ENCODE measurements at regions of chr3 and their contacts with region 1.

Region 1: DNA sequence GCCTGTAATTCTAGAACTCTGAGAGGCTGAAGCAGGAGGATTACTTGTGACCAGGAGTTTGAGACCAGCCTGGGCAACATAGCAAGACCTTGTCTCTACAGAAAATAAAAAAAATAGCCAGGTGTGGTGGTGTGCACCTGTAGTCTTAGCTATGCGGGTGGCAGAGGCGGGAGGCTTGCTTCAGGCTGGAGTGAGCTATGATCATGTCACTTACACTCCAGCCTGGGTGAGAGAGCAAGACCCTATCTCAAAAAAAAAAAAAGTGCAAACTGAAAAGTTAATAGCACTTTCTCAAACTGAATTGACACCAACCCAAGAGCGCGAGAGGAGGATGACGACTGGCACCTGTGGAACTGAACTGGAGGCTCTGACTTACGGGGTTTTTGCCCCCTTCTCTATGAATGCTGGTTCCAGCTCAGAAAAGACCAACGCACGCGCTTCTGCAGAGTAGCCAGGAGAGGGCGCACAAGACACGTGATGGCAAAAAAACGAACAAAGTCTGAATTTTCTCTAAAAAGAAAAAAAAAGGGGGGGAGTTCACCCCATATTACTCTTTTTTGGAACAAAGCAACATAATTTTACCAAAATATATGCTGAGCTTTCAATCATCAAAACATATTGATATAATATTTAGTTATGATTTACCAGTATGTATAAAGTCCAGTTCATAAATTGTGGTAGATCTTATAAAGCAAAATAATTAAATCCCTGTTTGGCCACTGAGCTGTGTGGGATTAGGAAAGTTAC is 23.7 kb downstream of the CFAP92 start:
- DNase-seq: peak; percentile 79
- ATAC-seq: peak; percentile 73
- H3K4me3 Mint-ChIP-seq: no peak overlapping the region
- H3K27ac Mint-ChIP-seq: no peak overlapping the region
- H3K4me1 Mint-ChIP-seq: peaks cover 14% of the 10 kb centered on the region
- H3K27me3 Mint-ChIP-seq: peaks cover 3% of the 10 kb centered on the region

Region 2: GRCh38 chr3:128879125-128879969 is 90.8 kb before region 1 on chr3 and contains the start of gene ACAD9:
- CTCF ChIA-PET with region 1: interaction called, 38 read pairs
- POLR2A ChIA-PET with region 1: no interaction called
- DNase-seq: peak; percentile 97
- ATAC-seq: peak; percentile 96
- H3K4me3 Mint-ChIP-seq: peak within 1 kb of the TSS; percentile 83
- H3K27ac Mint-ChIP-seq: peak within 1 kb of the TSS; percentile 90
- H3K4me1 Mint-ChIP-seq: peaks cover 57% of the 10 kb centered on the region
- H3K27me3 Mint-ChIP-seq: peaks cover 4% of the 10 kb centered on the region
- total RNA-seq, gene ACAD9: 61.3 to 68.3 TPM

Region 3: GRCh38 chr3:128993461-128994173 is 23.5 kb after region 1 on chr3 and contains the start of gene CFAP92:
- CTCF ChIA-PET with region 1: interaction called, 36 read pairs
- POLR2A ChIA-PET with region 1: interaction called, 3 read pairs
- DNase-seq: peak; percentile 95
- ATAC-seq: peak; percentile 98
- H3K4me3 Mint-ChIP-seq: peak within 1 kb of the TSS; percentile 65
- H3K27ac Mint-ChIP-seq: peak within 1 kb of the TSS; percentile 24
- H3K4me1 Mint-ChIP-seq: peaks cover 29% of the 10 kb centered on the region
- H3K27me3 Mint-ChIP-seq: peaks cover 10% of the 10 kb centered on the region
- total RNA-seq, gene CFAP92: 0.18 to 0.26 TPM

Region 4: DNA sequence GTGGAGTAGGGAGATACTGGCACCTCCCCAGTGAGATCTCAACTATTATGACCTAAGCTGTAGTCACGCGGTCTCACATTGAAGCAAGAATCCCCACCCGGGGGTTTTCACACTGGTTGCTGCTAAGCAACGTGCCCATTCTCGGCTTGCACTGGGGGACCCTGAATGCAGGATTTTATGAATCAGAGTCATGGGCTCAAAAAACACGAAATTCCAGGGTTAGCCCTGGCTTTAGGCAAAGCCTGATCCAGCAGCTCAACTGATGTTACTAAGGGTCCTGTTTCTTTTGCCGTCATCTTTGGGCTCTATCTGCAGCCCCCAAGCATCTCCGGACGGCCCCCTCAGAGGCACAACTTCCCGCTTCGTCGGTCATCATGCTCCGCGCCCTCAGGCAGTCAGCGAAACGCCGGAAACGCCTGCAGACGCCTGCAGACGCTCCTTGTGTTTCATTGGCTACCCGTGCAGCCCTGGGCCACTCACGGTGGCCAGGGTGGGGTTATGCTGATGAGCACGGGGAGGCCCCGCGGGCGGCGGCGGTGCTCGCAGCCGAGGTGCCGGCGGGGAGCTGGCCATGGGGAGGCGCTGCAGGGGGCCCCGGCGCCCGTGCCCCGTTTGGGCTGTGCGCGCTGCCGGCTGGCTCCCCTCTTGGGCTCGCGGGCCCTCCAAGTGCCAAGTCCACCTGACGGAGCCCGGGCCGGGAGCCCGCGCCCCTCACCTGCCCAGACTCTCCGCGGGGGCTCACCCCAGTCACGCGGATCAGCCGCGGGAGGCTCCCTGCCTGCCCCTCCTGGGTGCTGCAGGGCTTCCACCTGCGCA is 56.8 kb after region 1 on chr3:
- CTCF ChIA-PET with region 1: interaction called, 34 read pairs
- POLR2A ChIA-PET with region 1: no interaction called
- DNase-seq: peak; percentile 96
- ATAC-seq: peak; percentile 100
- H3K4me3 Mint-ChIP-seq: peak overlapping the region; percentile 81
- H3K27ac Mint-ChIP-seq: peak overlapping the region; percentile 95
- H3K4me1 Mint-ChIP-seq: peaks cover 30% of the 10 kb centered on the region
- H3K27me3 Mint-ChIP-seq: peaks cover 2% of the 10 kb centered on the region

Region 5: GRCh38 chr3:129068291-129068886 is 98.2 kb after region 1 on chr3:
- CTCF ChIA-PET with region 1: interaction called, 20 read pairs
- POLR2A ChIA-PET with region 1: no interaction called
- DNase-seq: peak; percentile 30
- ATAC-seq: peak; percentile 77
- H3K4me3 Mint-ChIP-seq: peak overlapping the region; percentile 58
- H3K27ac Mint-ChIP-seq: peak overlapping the region; percentile 39
- H3K4me1 Mint-ChIP-seq: peaks cover 25% of the 10 kb centered on the region
- H3K27me3 Mint-ChIP-seq: peaks cover 2% of the 10 kb centered on the region

Region 6: GRCh38 chr3:129132097-129132866 is 162.1 kb after region 1 on chr3:
- CTCF ChIA-PET with region 1: interaction called, 17 read pairs
- POLR2A ChIA-PET with region 1: no interaction called
- DNase-seq: no peak
- ATAC-seq: peak; percentile 31
- H3K4me3 Mint-ChIP-seq: no peak overlapping the region
- H3K27ac Mint-ChIP-seq: peak overlapping the region; percentile 48
- H3K4me1 Mint-ChIP-seq: peaks cover 11% of the 10 kb centered on the region
- H3K27me3 Mint-ChIP-seq: no peaks in the 10 kb centered on the region

Region 7: DNA sequence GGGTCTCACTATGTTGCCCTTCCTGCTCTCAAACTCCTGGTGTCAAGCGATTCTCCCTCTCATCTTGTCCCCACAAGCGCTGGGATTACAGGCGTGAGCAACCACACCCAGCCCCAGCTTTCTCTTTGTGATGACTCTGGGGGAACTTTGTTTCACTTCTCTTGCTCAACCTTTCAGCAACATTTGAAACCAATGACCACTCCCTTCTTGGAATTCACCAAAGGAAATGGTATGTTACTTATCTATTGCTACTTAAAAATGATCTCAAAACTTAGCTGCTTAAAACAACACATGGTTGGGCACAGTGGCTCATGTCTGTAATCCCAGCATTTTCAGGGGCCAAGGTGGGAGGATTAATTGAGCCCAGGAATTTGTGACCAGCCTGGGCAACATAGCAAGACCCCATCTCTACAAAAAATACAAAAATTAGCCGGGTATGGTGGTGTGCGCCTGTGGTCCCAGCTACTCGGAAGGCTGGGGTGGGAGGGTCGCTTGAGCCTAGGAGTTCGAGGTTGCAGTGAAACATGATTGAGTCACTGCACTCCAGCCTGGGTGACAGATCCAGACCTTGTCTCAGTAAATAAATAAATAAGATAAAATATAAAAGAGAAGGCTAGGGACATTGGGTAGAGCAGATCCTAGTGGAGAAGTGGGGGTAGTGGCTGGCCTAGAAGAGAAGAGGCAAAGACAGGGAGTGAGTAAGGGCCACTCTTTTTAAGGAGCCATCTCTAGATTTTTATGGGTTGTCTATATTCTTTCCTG is 269.0 kb after region 1 on chr3:
- CTCF ChIA-PET with region 1: interaction called, 23 read pairs
- POLR2A ChIA-PET with region 1: no interaction called
- DNase-seq: peak; percentile 70
- ATAC-seq: peak; percentile 80
- H3K4me3 Mint-ChIP-seq: peak overlapping the region; percentile 69
- H3K27ac Mint-ChIP-seq: peak overlapping the region; percentile 93
- H3K4me1 Mint-ChIP-seq: peaks cover 53% of the 10 kb centered on the region
- H3K27me3 Mint-ChIP-seq: no peaks in the 10 kb centered on the region

Measured in activated CD8-positive, alpha-beta T cell treated with anti-CD3 and anti-CD28 coated beads, Interleukin-2, amount 10 ng/mL, durations not matched to agents 7 days and 5 days (primary cell).